HepG2 (cell line): ENCODE measurements at regions of chr16 and their contacts with region 1.

Region 1: GRCh38 chr16:14399378-14400284 is 230.4 kb downstream of the PARN start:
- DNase-seq: peak; percentile 99
- ATAC-seq: peak; percentile 88
- H3K4me3 ChIP-seq: peak overlapping the region; percentile 31 to 67 (median 47)
- H3K27ac ChIP-seq: peak overlapping the region; percentile 95
- H3K4me1 ChIP-seq: peaks cover 96% of the 10 kb centered on the region
- H3K27me3 ChIP-seq: no peaks in the 10 kb centered on the region
- CTCF ChIP-seq: 0 out of 2 replicates have a peak, but pooled peaks have one; percentile 28
- EP300 ChIP-seq: peak; percentile 90 to 96
- POLR2A ChIP-seq: peak; percentile 82 to 84
- RAD21 ChIP-seq: no peak

Region 2: GRCh38 chr16:14632692-14633569 is 233.3 kb after region 1 on chr16 and contains the start of gene BFAR:
- CTCF ChIA-PET with region 1: no interaction called
- POLR2A ChIA-PET with region 1: no interaction called
- in situ Hi-C with region 1: no loop called
- intact Hi-C with region 1: loop called (anchors 5 kb)
- DNase-seq: peak; percentile 99
- ATAC-seq: peak; percentile 87
- H3K4me3 ChIP-seq: peak within 1 kb of the TSS; percentile 89 to 95 (median 91)
- H3K27ac ChIP-seq: peak within 1 kb of the TSS; percentile 80
- H3K4me1 ChIP-seq: peaks cover 72% of the 10 kb centered on the region
- H3K27me3 ChIP-seq: no peaks in the 10 kb centered on the region; a peak in 1 of 5 replicates
- CTCF ChIP-seq: no peak; the same call in 1 of the 2 replicates
- EP300 ChIP-seq: peak; percentile 18 to 45; a peak in 3 of 4 replicates
- POLR2A ChIP-seq: peak; percentile 99 to 100; a peak in 3 of 4 replicates
- RAD21 ChIP-seq: peak; percentile 33
- total RNA-seq, gene BFAR: 96.9 and 98.2 TPM in 2 replicates